ENCODE measurements at regions of chr16 and their contacts with region 1.

Region 1: DNA sequence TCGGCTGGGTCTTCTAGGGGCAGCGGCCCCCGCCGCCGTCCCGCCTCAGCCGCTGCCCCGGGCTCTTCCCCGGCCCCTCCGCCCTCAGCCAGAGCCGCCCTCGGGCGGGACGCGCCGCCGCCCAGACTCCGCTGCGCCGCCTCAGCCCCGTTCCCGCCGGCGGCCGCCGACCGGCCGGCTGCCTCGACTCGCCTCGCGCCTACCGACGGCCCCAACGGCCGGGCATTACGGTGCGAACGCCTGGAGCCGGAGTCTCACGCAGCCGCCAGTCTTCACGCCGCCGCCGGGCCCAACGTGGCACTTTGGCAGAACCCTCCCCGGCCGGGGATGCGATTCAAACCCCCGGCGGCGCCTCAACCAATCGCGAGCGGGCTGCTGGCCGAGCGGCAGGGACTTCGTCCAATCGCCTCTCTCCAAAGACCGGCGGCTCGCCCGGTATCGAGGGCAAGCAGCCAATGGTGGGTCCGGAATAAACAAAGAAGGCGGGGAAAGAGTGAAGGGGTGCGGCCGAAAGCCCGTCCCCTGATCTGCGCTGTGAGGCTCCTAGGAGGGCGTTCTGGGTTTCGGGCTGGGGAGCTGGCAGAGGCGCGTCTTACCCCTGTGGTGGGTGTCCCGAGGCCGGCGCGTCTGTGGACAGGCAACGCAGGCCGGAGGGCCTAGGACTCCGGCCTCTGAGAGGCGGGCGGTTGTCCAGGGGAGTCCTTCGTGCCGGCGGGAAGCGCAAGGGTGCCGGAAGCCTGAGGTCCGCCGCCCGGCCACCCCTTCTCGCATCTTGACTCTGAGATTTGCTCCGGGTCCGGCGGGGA is at the start of gene CDR2:
- DNase-seq: peak; percentile 98
- H3K4me3 ChIP-seq: peak within 1 kb of the TSS; percentile 88 to 89
- H3K27ac ChIP-seq: peak within 1 kb of the TSS; percentile 82 to 88
- H3K4me1 ChIP-seq: no peaks in the 10 kb centered on the region
- H3K27me3 ChIP-seq: no peaks in the 10 kb centered on the region
- CTCF ChIP-seq: peak in 1 of 4 experiments; percentile 6
- POLR2A ChIP-seq: peak; percentile 89
- total RNA-seq, gene CDR2: 24.5 to 31.9 TPM

Region 2: GRCh38 chr16:21101631-21102420 is 1272.7 kb before region 1 on chr16:
- intact Hi-C with region 1: no loop called
- DNase-seq: no peak
- H3K4me3 ChIP-seq: no peak overlapping the region
- H3K27ac ChIP-seq: no peak overlapping the region
- H3K4me1 ChIP-seq: no peaks in the 10 kb centered on the region
- H3K27me3 ChIP-seq: no peaks in the 10 kb centered on the region
- CTCF ChIP-seq: peak in 1 of 4 experiments; percentile 10
- POLR2A ChIP-seq: no peak

Region 3: GRCh38 chr16:22214889-22215288 is 159.6 kb before region 1 on chr16:
- intact Hi-C with region 1: loop called (anchors 5 kb)
- DNase-seq: no peak
- H3K4me3 ChIP-seq: no peak overlapping the region
- H3K27ac ChIP-seq: no peak overlapping the region
- H3K4me1 ChIP-seq: peaks cover 27% of the 10 kb centered on the region
- H3K27me3 ChIP-seq: no peaks in the 10 kb centered on the region
- CTCF ChIP-seq: no peak
- POLR2A ChIP-seq: no peak

Region 4: GRCh38 chr16:22321339-22322001 is 53.0 kb before region 1 on chr16:
- intact Hi-C with region 1: loop called (anchors 5 kb)
- DNase-seq: peak; percentile 77
- H3K4me3 ChIP-seq: no peak overlapping the region
- H3K27ac ChIP-seq: no peak overlapping the region
- H3K4me1 ChIP-seq: no peaks in the 10 kb centered on the region
- H3K27me3 ChIP-seq: no peaks in the 10 kb centered on the region
- CTCF ChIP-seq: peak; percentile 73 to 93 (median 92)
- POLR2A ChIP-seq: no peak

Region 5: DNA sequence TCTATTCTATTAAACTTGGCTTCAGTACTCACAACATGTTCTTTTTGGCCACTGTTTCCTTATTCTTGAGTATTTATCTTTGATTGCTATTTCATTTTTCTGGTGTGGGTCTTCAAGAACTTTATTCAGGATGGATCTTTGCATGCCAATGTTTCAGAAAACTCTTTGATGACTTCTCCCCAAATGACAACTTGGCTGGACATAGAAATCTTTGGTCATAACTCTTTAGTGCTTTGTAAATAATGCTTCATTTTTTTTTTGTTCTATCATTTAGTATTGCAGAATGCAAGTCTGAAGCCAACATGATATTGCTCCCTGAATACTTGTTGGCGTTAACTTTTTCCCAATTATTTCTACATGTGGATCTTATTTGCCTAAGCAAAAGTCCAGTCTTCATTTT is 335.8 kb after region 1 on chr16:
- intact Hi-C with region 1: no loop called
- DNase-seq: no peak
- H3K4me3 ChIP-seq: no peak overlapping the region
- H3K27ac ChIP-seq: no peak overlapping the region
- H3K4me1 ChIP-seq: no peaks in the 10 kb centered on the region
- H3K27me3 ChIP-seq: no peaks in the 10 kb centered on the region
- CTCF ChIP-seq: no peak
- POLR2A ChIP-seq: no peak

Region 6: GRCh38 chr16:23232806-23233205 is 858.3 kb after region 1 on chr16:
- intact Hi-C with region 1: no loop called
- DNase-seq: no peak
- H3K4me3 ChIP-seq: no peak overlapping the region
- H3K27ac ChIP-seq: no peak overlapping the region
- H3K4me1 ChIP-seq: no peaks in the 10 kb centered on the region
- H3K27me3 ChIP-seq: peaks cover 2% of the 10 kb centered on the region
- CTCF ChIP-seq: no peak
- POLR2A ChIP-seq: no peak